Endothelial cell of umbilical vein (primary cell): ENCODE measurements at regions of chr15 and their contacts with region 1.

Region 1: DNA sequence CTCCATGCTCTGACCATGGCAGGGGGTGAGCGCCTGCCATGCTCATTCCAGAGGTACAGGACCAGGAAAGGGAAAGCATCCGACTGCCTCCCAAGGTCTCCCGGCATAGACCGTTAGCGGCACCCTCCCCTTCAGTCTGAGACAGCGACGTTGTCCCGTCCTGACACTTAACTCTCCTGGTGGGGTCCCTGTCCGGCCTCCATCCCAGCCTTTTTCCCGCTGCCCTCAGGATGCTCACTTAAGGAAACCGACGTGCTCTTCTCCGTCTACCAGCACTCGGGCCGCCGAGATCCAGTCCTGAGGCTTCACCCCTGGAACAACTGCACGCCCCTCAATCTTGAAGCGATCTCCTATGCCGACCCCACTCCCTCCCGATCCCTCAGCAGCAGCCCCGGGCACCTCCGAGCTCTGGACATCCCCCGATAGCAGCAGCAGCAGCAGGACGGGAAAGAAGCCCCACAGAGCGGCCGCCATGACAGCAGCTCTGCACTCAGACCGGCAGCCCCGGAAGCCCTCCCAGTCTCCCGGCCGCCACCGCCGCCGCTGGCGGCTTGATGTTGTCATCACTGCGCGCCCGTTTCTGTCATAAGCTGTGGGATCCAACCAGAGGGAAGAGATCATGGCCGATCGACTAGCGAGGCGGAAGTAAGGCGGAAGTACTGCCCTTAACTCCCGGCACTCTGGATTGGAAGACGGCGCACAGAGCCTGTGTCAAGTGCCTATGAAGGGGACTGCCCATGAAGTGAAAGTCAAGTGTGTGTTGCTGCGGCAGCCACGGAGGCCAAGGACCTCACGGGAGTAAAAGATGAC is at the starts of genes EMC7 and PGBD4:
- DNase-seq: peak; percentile 99
- H3K4me3 ChIP-seq: peak within 1 kb of the TSS; percentile 66 to 90 (median 66)
- H3K27ac ChIP-seq: peak within 1 kb of the TSS; percentile 78
- H3K4me1 ChIP-seq: peaks cover 17% of the 10 kb centered on the region
- H3K27me3 ChIP-seq: no peaks in the 10 kb centered on the region
- CTCF ChIP-seq: no peak
- POLR2A ChIP-seq: peak; percentile 85
- total RNA-seq, gene EMC7: 69.9 and 70.6 TPM in 2 replicates
- total RNA-seq, gene PGBD4: 1.1 TPM in 2 replicates

Region 2: DNA sequence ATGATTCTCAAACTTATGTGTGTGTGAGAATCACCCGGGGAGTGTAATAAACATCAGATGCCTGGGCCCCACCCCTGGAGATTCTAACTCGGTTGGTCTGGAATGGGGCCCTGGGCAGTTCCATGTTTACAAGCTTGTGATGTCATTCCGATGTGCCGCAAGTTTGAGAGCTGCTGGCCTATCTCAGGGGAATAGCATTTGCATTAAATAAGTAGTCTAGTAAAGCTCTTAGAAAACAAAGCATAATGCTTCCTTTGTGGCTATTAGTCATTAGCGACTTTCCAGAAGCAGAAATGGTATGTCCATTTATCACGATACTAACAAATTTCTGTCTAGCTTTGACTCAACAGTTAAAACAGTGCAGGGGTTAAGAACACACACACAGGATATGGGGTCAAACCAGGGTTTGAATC is 21.2 kb after region 1 on chr15:
- CTCF ChIA-PET with region 1: no interaction called
- POLR2A ChIA-PET with region 1: no interaction called
- dilution Hi-C with region 1: no loop called
- intact Hi-C with region 1: loop called (anchors 1 kb)
- DNase-seq: peak; percentile 87
- H3K4me3 ChIP-seq: no peak overlapping the region
- H3K27ac ChIP-seq: peak overlapping the region; percentile 85
- H3K4me1 ChIP-seq: peaks cover 16% of the 10 kb centered on the region
- H3K27me3 ChIP-seq: no peaks in the 10 kb centered on the region
- CTCF ChIP-seq: no peak
- POLR2A ChIP-seq: no peak

Region 3: GRCh38 chr15:34337557-34338306 is 236.2 kb after region 1 on chr15 and contains the start of gene SLC12A6:
- CTCF ChIA-PET with region 1: no interaction called
- POLR2A ChIA-PET with region 1: no interaction called
- dilution Hi-C with region 1: no loop called
- intact Hi-C with region 1: loop called (anchors 1 kb)
- DNase-seq: peak; percentile 92
- H3K4me3 ChIP-seq: peak within 1 kb of the TSS; percentile 54 to 83 (median 61)
- H3K27ac ChIP-seq: peak within 1 kb of the TSS; percentile 71
- H3K4me1 ChIP-seq: peaks cover 43% of the 10 kb centered on the region
- H3K27me3 ChIP-seq: no peaks in the 10 kb centered on the region
- CTCF ChIP-seq: no peak
- POLR2A ChIP-seq: peak; percentile 56
- total RNA-seq, gene SLC12A6: 27.1 and 29.4 TPM in 2 replicates

Region 4: GRCh38 chr15:34437687-34438086 is 336.1 kb after region 1 on chr15 and contains the start of gene GOLGA8A:
- CTCF ChIA-PET with region 1: no interaction called
- POLR2A ChIA-PET with region 1: no interaction called
- dilution Hi-C with region 1: no loop called
- intact Hi-C with region 1: loop called (anchors 10 kb)
- DNase-seq: peak; percentile 81
- H3K4me3 ChIP-seq: peak within 1 kb of the TSS; percentile 68 to 78 (median 77)
- H3K27ac ChIP-seq: peak within 1 kb of the TSS; percentile 23
- H3K4me1 ChIP-seq: peaks cover 7% of the 10 kb centered on the region
- H3K27me3 ChIP-seq: peaks cover 2 to 8% of the 10 kb centered on the region in 2 experiments
- CTCF ChIP-seq: no peak
- POLR2A ChIP-seq: no peak
- total RNA-seq, gene GOLGA8A: 53.5 and 61.1 TPM in 2 replicates